ENCODE measurements at regions of chr3 and their contacts with region 1.

Region 1: GRCh38 chr3:106795553-106795952 is 581.7 kb upstream of the CCDC54 start:
- DNase-seq: no peak
- ATAC-seq: no peak
- H3K4me3 ChIP-seq: no peak overlapping the region
- H3K27ac ChIP-seq: no peak overlapping the region
- H3K4me1 ChIP-seq: peaks cover 16% of the 10 kb centered on the region
- H3K27me3 ChIP-seq: no peaks in the 10 kb centered on the region
- CTCF ChIP-seq: no peak

Region 2: DNA sequence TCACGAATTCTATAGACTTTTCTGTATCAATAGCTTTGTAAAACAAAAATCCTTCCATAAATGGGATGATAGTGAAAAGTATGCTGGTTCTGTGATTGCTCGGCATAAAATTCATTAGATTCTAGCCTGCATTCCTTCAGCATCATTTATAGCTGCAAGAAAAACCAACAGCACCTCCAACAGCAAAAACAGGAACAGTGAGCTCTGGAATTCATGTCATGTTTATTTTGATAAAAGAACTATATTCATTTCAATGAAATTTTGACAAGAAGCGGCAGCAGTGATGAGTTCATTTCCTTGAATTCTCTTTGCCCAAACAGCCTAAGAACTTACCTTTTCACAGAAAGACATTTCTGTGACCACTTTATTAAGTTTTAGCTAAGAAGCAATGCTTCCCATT is 66.5 kb after region 1 on chr3:
- CTCF ChIA-PET with region 1: no interaction called
- POLR2A ChIA-PET with region 1: interaction called, 11 read pairs
- intact Hi-C with region 1: no loop called
- DNase-seq: peak; percentile 42
- ATAC-seq: peak; percentile 37; the same call in 1 of the 2 replicates
- H3K4me3 ChIP-seq: no peak overlapping the region
- H3K27ac ChIP-seq: no peak overlapping the region
- H3K4me1 ChIP-seq: peaks cover 28% of the 10 kb centered on the region
- H3K27me3 ChIP-seq: no peaks in the 10 kb centered on the region
- CTCF ChIP-seq: peak; percentile 49

Measured in PC-3 (cell line).